Testis (tissue), 5 donors: ENCODE measurements at regions of chr11 and their contacts with region 1.

Region 1: DNA sequence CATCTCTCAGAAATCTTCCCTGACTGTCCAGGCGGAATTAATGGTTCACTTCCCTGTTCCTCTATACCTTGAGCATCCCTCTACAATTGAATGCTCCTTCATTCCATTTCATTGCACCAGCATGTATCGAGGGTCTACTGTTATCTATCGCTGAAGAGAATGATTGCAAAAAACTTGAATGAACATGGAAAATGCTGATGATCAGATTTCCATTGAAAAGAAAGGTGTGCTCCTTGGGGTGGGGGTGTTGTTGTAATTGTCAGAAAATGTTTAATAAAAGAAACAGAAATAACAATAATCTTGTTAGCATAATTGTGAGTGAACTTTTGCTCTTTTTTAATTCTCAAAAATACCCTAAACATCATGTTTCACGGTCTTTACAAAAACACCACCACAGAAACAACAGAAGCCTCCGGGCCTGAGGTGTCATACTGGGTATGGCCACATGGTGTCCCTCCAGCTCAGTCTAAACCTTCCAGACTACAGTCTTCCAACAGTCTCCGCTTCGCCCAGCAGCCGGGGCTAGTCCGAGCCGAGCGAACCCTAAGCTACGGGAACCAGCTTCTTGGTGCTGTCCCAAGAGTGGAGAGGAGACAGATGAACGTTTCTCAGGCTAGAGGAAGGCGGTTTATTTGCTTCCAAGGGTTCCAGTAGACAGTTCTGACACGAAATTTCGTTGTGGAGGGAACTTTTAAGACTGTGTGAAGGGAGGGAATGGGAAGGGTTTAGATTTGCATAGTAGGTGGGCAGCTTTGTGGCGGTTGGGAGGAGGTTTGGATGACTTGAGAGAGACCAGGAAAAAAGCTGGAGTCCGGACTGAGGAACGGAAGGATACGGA is 75.8 kb upstream of the ZBED5 start:
- DNase-seq: peak; percentile 96
- H3K4me3 ChIP-seq: peak overlapping the region; percentile 13 to 34
- H3K27ac ChIP-seq: peak overlapping the region; percentile 61 to 66
- H3K4me1 ChIP-seq: peaks cover 8% of the 10 kb centered on the region
- H3K27me3 ChIP-seq: no peaks in the 10 kb centered on the region
- CTCF ChIP-seq: peak; percentile 93 to 98 (median 95)
- POLR2A ChIP-seq: no peak

Region 2: DNA sequence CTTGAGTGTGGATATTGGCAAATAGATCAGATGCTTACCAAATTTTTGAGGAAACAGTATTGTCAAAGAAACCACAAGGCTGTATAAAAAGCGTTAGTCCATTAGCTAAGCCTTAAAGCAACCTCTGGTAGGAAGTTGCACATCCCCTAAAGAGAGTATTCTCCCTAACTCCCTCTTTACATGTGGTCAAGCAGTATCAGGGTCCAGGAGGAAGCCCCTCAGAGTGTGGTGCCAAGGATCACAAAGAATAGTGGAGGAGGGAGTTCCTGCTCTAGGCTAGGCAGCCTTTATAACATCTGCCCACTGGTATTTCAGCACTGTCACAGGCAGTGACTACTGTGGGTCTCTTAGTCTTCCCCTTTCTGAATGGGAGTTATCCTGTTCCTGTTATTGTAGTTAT is 497.4 kb before region 1 on chr11:
- intact Hi-C with region 1: no loop called
- DNase-seq: no peak
- H3K4me3 ChIP-seq: no peak overlapping the region
- H3K27ac ChIP-seq: no peak overlapping the region
- H3K4me1 ChIP-seq: no peaks in the 10 kb centered on the region
- H3K27me3 ChIP-seq: no peaks in the 10 kb centered on the region
- CTCF ChIP-seq: no peak
- POLR2A ChIP-seq: no peak

Region 3: GRCh38 chr11:10808553-10809372 is 124.9 kb before region 1 on chr11 and contains the start of gene EIF4G2:
- intact Hi-C with region 1: loop called (anchors 5 kb)
- DNase-seq: peak; percentile 99
- H3K4me3 ChIP-seq: peak within 1 kb of the TSS; percentile 92 to 100
- H3K27ac ChIP-seq: peak within 1 kb of the TSS; percentile 99 to 100
- H3K4me1 ChIP-seq: peaks cover 16% of the 10 kb centered on the region
- H3K27me3 ChIP-seq: no peaks in the 10 kb centered on the region
- CTCF ChIP-seq: no peak
- POLR2A ChIP-seq: peak; percentile 95
- total RNA-seq, gene EIF4G2: 451 to 519 TPM

Region 4: DNA sequence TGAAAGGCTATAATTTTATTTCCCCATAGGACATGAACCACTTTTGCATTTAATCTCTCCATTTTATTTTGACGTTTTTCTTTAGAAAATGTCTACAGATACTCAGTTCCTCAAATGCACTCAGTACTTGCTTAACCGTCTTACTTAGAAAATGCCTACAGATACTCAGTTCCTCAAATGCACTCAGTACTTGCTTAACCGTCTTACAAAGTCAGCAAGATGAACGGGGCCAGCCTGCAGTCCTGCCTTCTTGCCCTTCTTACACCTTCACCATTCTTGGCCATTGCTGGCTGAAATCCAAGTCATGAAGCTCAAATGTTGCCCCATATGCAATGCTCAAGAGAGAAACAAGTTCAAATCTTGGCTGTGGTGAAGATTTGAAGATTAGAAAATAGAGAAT is 385.3 kb after region 1 on chr11:
- intact Hi-C with region 1: no loop called
- DNase-seq: no peak
- H3K4me3 ChIP-seq: no peak overlapping the region
- H3K27ac ChIP-seq: no peak overlapping the region
- H3K4me1 ChIP-seq: peaks cover 14% of the 10 kb centered on the region
- H3K27me3 ChIP-seq: no peaks in the 10 kb centered on the region
- CTCF ChIP-seq: no peak
- POLR2A ChIP-seq: no peak

Region 5: GRCh38 chr11:11787305-11788062 is 853.8 kb after region 1 on chr11:
- intact Hi-C with region 1: loop called (anchors 5 kb)
- DNase-seq: peak; percentile 80
- H3K4me3 ChIP-seq: no peak overlapping the region
- H3K27ac ChIP-seq: no peak overlapping the region
- H3K4me1 ChIP-seq: no peaks in the 10 kb centered on the region
- H3K27me3 ChIP-seq: no peaks in the 10 kb centered on the region
- CTCF ChIP-seq: peak; percentile 78 to 96 (median 91)
- POLR2A ChIP-seq: no peak